ENCODE measurements at regions of chr11 and their contacts with region 1.

Region 1: GRCh38 chr11:112289588-112290492 is 29.2 kb upstream of the PLET1 start:
- DNase-seq: peak; percentile 77
- ATAC-seq: peak; percentile 91
- H3K4me3 ChIP-seq: peak overlapping the region; percentile 74
- H3K27ac ChIP-seq: no peak overlapping the region
- H3K4me1 ChIP-seq: peaks cover 25% of the 10 kb centered on the region
- H3K27me3 ChIP-seq: no peaks in the 10 kb centered on the region
- CTCF ChIP-seq: peak; percentile 94

Region 2: GRCh38 chr11:112174789-112175598 is 114.8 kb before region 1 on chr11 and contains the start of gene BCO2:
- CTCF ChIA-PET with region 1: no interaction called
- POLR2A ChIA-PET with region 1: no interaction called
- intact Hi-C with region 1: no loop called
- DNase-seq: peak; percentile 84
- ATAC-seq: peak; percentile 89
- H3K4me3 ChIP-seq: peak within 1 kb of the TSS; percentile 58
- H3K27ac ChIP-seq: no peak within 1 kb of the TSS
- H3K4me1 ChIP-seq: peaks cover 27% of the 10 kb centered on the region
- H3K27me3 ChIP-seq: no peaks in the 10 kb centered on the region
- CTCF ChIP-seq: peak; percentile 99
- total RNA-seq, gene BCO2: 1.6 and 2.9 TPM in 2 replicates

Region 3: DNA sequence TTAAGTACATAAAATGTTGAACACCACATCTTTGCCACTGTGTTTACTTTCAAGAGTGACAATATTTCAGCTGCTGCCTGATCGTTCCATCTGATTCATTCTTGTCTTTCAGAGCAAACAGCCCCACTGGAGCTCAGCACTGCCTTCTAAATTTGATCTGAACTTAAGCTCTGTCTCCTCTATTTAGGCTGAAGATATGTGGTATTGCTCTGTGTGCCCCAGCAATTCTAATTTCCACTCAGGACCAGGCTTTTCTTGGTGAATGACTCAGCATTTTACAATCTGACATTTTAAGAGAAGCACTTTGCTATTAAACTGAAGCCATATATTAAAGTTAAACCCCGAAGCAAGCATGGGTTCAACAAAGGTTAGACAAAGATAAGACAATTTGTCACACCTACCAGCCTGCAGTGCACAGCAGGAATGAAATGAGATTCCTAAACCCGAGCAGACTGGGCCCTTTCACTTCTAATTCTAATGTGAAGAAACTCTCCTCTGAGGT is 12.4 kb after region 1 on chr11:
- CTCF ChIA-PET with region 1: no interaction called
- POLR2A ChIA-PET with region 1: no interaction called
- intact Hi-C with region 1: no loop called
- DNase-seq: peak; percentile 53
- ATAC-seq: peak; percentile 73
- H3K4me3 ChIP-seq: no peak overlapping the region; the same call in 1 of the 2 replicates
- H3K27ac ChIP-seq: peak overlapping the region; percentile 31
- H3K4me1 ChIP-seq: peaks cover 10% of the 10 kb centered on the region
- H3K27me3 ChIP-seq: no peaks in the 10 kb centered on the region
- CTCF ChIP-seq: no peak

Region 4: GRCh38 chr11:112318193-112318592 is 28.4 kb after region 1 on chr11:
- CTCF ChIA-PET with region 1: no interaction called
- POLR2A ChIA-PET with region 1: no interaction called
- intact Hi-C with region 1: loop called (anchors 2 kb)
- DNase-seq: peak; percentile 99
- ATAC-seq: peak; percentile 62
- H3K4me3 ChIP-seq: no peak overlapping the region
- H3K27ac ChIP-seq: peak overlapping the region; percentile 68
- H3K4me1 ChIP-seq: peaks cover 53% of the 10 kb centered on the region
- H3K27me3 ChIP-seq: no peaks in the 10 kb centered on the region
- CTCF ChIP-seq: no peak

Region 5: GRCh38 chr11:112334381-112334780 is 44.5 kb after region 1 on chr11:
- CTCF ChIA-PET with region 1: no interaction called
- POLR2A ChIA-PET with region 1: no interaction called
- intact Hi-C with region 1: no loop called
- DNase-seq: peak; percentile 28
- ATAC-seq: no peak
- H3K4me3 ChIP-seq: no peak overlapping the region
- H3K27ac ChIP-seq: no peak overlapping the region
- H3K4me1 ChIP-seq: no peaks in the 10 kb centered on the region
- H3K27me3 ChIP-seq: peaks cover 7% of the 10 kb centered on the region; the same call in 1 of the 2 replicates
- CTCF ChIP-seq: no peak

Region 6: DNA sequence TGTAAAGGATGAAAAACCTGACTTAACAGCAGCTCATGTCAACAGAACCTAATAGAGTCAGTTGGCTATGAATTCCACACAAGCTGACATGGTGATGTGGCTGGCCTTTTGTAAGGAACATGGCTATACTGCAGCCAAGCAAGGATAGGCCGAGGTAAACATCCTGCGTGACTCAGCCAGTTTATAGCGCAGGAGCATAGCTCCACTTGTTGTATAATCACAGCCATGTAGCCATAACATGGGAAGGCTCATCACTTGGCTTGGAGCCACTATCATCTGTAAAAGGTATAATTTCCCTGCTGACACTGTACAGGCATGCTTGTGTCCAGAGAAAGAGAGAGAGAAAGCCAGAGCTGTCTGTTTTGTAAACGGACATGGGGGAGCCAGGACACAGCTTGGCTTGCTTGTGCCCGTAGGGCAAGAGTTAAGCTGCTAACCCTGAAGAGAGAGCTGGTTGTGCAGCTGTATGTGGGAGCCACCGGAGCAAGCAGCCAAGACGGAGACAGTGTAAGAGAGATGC is 75.2 kb after region 1 on chr11:
- CTCF ChIA-PET with region 1: no interaction called
- POLR2A ChIA-PET with region 1: no interaction called
- intact Hi-C with region 1: loop called (anchors 2 kb)
- DNase-seq: peak; percentile 96
- ATAC-seq: peak; percentile 98
- H3K4me3 ChIP-seq: no peak overlapping the region
- H3K27ac ChIP-seq: peak overlapping the region; percentile 27
- H3K4me1 ChIP-seq: peaks cover 24% of the 10 kb centered on the region
- H3K27me3 ChIP-seq: 0 out of 2 replicates have a peak, but pooled peaks cover 3% of the 10 kb centered on the region
- CTCF ChIP-seq: no peak

Region 7: DNA sequence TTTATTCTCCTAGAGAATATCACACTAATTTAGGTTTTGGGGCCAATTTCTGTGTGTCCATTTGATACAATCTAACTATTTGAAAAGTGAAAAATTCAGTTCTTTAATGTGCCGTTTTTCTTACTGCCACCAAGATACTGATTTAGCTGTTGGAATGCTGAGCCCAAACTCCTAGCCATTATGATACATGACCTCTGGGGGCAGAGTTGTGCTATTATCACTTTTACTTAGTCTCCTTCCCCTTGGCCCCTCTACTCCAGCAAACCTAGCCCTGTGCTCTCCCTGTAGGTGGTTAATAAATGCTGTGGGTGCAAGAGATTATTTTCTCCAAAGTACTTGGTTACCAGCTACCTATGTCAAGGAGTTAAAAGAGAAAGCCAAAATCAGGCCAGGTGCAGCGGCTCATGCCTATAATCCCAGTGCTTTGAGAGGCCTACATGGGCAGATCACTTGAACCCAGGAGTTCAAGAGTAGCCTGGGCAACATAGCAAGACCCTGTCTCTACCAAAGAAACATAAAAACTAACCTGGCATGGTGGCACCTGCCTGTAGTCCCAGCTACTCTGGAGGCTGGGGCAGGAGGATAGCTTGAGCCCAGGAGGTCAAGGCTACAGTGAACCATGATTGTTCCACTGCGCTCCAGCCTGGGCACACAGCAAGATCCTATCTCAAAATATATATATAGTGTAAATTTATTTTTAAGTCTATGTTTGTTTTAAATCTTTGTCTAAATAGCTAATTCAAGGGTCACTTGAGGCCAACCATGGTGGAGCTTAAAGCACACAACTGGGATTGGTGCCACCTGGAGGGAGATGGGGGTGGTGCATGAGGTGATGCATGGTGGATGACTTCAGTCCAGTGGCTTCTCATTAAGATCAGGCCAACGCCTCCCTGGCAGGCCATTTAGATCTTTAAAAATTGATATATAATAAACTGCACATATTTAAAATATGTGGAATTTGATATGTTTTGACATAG is 164.0 kb after region 1 on chr11:
- CTCF ChIA-PET with region 1: no interaction called
- POLR2A ChIA-PET with region 1: no interaction called
- intact Hi-C with region 1: loop called (anchors 1 kb)
- DNase-seq: peak; percentile 60
- ATAC-seq: peak; percentile 57; the same call in 1 of the 2 replicates
- H3K4me3 ChIP-seq: no peak overlapping the region
- H3K27ac ChIP-seq: no peak overlapping the region
- H3K4me1 ChIP-seq: no peaks in the 10 kb centered on the region
- H3K27me3 ChIP-seq: peaks cover 7% of the 10 kb centered on the region; the same call in 1 of the 2 replicates
- CTCF ChIP-seq: peak; percentile 59

Region 8: DNA sequence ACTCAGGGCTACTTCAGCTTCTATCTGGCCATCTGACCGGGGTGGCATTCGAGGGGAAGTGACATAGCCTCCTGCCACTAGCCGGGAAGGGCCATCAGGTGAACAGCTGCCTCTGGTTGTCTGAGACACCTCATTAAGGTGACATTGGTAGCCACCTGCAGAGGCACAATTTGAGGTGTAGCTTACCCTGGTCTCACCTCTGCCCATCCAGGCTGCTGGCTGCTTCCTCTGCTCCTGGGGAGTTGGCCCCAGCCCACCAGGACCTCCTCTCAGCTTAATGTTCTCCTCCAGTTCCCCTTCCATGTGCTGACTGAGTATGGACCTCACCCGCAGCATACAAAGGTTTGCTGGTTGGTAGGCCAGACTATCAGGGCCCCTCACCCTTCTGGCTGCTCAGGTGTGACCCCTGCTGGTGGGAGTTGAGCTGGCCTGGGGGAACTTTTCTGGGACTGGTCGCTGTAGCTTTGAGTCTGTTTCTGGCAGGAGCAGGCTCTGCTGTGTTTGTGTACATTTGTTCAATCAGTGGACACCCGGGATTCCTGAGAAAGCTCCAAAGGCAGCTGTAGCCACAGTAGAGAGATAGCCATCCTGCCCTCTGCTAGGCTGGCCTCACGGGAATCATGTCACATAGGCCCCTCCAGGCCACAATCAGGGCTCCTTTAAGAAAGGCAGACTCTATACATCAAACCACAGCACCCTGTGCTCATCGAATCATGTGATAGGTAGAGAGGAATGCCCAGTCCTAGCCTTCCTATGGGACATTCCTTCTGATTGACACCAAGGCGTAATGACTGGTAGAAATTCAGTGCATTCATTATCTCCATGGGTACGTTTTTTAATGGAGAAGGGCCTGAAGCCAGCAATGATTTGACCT is 265.9 kb after region 1 on chr11:
- CTCF ChIA-PET with region 1: no interaction called
- POLR2A ChIA-PET with region 1: no interaction called
- intact Hi-C with region 1: loop called (anchors 1 kb)
- DNase-seq: peak; percentile 65
- ATAC-seq: peak; percentile 50; the same call in 1 of the 2 replicates
- H3K4me3 ChIP-seq: no peak overlapping the region
- H3K27ac ChIP-seq: no peak overlapping the region
- H3K4me1 ChIP-seq: no peaks in the 10 kb centered on the region
- H3K27me3 ChIP-seq: peaks cover 27% of the 10 kb centered on the region
- CTCF ChIP-seq: peak; percentile 87

Region 9: DNA sequence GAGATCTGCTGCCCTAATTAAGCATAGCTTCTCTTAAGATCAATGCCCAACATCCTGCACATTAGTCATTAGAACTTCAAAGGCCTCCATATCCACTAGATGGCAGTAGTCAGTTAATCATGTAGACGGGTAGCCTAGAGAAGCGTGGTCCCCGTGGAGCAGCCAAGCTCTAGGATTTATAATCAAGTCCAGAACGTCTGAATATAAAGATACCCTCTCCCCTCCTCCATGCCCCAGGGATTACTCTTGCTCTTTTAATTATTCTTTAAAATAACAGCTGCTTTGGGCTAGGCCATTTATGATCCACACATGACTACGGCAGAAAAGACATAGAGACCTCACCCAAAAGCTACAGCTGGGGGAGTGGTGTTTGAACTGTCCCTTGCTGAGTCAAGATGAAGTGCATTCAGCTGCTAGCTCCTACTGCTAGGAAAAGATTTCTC is 298.4 kb after region 1 on chr11:
- CTCF ChIA-PET with region 1: no interaction called
- POLR2A ChIA-PET with region 1: no interaction called
- intact Hi-C with region 1: loop called (anchors 1 kb)
- DNase-seq: peak; percentile 90
- ATAC-seq: peak; percentile 94
- H3K4me3 ChIP-seq: no peak overlapping the region
- H3K27ac ChIP-seq: no peak overlapping the region
- H3K4me1 ChIP-seq: no peaks in the 10 kb centered on the region
- H3K27me3 ChIP-seq: peaks cover 8% of the 10 kb centered on the region; the same call in 1 of the 2 replicates
- CTCF ChIP-seq: peak; percentile 87

Region 10: DNA sequence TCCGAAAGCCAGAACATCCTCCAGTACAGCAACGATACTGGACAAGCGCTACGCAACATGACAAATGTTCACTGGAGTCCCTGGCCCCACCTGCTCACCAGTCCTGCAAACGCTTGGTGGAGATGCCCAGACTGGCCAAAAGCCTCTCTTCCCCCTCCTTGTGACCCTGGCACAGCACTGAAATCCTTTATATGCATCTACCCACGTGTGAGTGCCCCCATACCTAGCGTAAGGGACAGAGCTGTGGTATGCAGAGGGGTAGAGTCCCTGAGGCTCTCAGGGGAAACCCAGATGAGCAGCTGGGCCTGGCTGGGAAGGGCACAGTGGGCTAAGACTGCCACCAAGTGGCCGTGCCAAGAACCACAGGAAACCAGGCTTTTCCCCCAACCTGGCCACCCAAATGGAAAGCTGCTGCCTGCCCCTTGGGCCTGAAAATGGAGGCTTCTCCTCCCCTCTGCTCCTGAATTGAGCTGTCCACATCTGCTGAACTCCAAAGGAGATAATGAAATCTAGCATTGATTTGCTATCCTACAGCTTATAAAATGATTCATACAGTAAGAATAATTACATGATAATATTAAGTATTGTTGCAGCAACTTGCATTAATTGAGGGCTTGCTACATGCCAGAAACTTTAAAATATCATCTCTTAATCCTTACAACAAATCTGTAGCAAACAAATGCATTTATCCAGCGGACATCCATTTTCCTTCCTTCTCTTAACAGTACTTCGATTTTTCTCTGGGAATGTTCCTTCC is 999.8 kb after region 1 on chr11:
- CTCF ChIA-PET with region 1: interaction called, 5 read pairs
- POLR2A ChIA-PET with region 1: interaction called, 4 read pairs
- intact Hi-C with region 1: loop called (anchors 1 kb)
- DNase-seq: peak; percentile 73
- ATAC-seq: peak; percentile 89
- H3K4me3 ChIP-seq: no peak overlapping the region
- H3K27ac ChIP-seq: no peak overlapping the region
- H3K4me1 ChIP-seq: peaks cover 11% of the 10 kb centered on the region
- H3K27me3 ChIP-seq: peaks cover 19% of the 10 kb centered on the region; the same call in 1 of the 2 replicates
- CTCF ChIP-seq: peak; percentile 94